Breast epithelium (tissue), 4 donors: ENCODE measurements at regions of chr11 and their contacts with region 1.

Region 1: GRCh38 chr11:35106595-35106994 is 32.4 kb upstream of the CD44 start:
- DNase-seq: no peak
- H3K4me3 ChIP-seq: no peak overlapping the region
- H3K27ac ChIP-seq: no peak overlapping the region
- H3K4me1 ChIP-seq: peaks cover 0 to 11% of the 10 kb centered on the region in 2 donors
- H3K27me3 ChIP-seq: no peaks in the 10 kb centered on the region
- CTCF ChIP-seq: no peak
- POLR2A ChIP-seq: no peak

Region 2: GRCh38 chr11:34671946-34672345 is 434.6 kb before region 1 on chr11:
- intact Hi-C with region 1: no loop called
- DNase-seq: no peak
- H3K4me3 ChIP-seq: no peak overlapping the region
- H3K27ac ChIP-seq: no peak overlapping the region
- H3K4me1 ChIP-seq: no peaks in the 10 kb centered on the region
- H3K27me3 ChIP-seq: no peaks in the 10 kb centered on the region
- CTCF ChIP-seq: no peak
- POLR2A ChIP-seq: no peak

Region 3: GRCh38 chr11:35030716-35031213 is 75.8 kb before region 1 on chr11:
- intact Hi-C with region 1: loop called (anchors 5 kb)
- DNase-seq: no peak
- H3K4me3 ChIP-seq: no peak overlapping the region
- H3K27ac ChIP-seq: no peak overlapping the region
- H3K4me1 ChIP-seq: no peaks in the 10 kb centered on the region
- H3K27me3 ChIP-seq: no peaks in the 10 kb centered on the region
- CTCF ChIP-seq: no peak
- POLR2A ChIP-seq: no peak